ENCODE measurements at regions of chr17 and their contacts with region 1.

Region 1: GRCh38 chr17:76623271-76624146 is 20.0 kb downstream of the ST6GALNAC1 start:
- DNase-seq: peak; percentile 62 to 87 (median 79)
- H3K4me3 ChIP-seq: no peak overlapping the region
- H3K27ac ChIP-seq: no peak overlapping the region
- H3K4me1 ChIP-seq: no peaks in the 10 kb centered on the region
- H3K27me3 ChIP-seq: no peaks in the 10 kb centered on the region
- CTCF ChIP-seq: peak; percentile 71 to 95 (median 78)
- EP300 ChIP-seq: no peak
- POLR2A ChIP-seq: no peak

Region 2: DNA sequence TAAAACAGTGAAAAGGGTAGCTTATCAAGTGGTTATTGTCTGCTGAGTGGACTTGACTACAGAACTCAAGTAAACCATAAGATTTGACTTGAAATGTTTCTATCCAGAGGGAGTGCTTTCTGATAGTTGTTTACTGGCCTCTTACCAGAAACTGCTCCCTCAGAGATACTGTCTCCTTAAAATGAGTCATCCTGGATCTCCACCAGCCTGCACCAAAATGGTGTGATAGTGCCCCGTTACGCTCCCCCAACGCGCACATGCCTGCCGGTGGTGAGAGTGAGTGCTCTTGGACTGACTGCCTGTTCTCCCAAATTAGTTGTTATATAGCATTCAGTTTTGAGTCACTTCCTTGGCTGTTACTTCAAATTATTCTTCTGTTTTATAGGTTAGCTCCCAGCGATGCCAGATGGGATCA is 60.8 kb before region 1 on chr17:
- intact Hi-C with region 1: no loop called
- DNase-seq: peak; percentile 70 to 75 (median 73)
- H3K4me3 ChIP-seq: no peak overlapping the region
- H3K27ac ChIP-seq: no peak overlapping the region
- H3K4me1 ChIP-seq: peaks cover 24% of the 10 kb centered on the region
- H3K27me3 ChIP-seq: no peaks in the 10 kb centered on the region
- CTCF ChIP-seq: no peak
- EP300 ChIP-seq: no peak
- POLR2A ChIP-seq: no peak

Region 3: GRCh38 chr17:76714822-76715495 is 91.5 kb after region 1 on chr17:
- intact Hi-C with region 1: loop called in 1 of 4 experiments (anchors 10 kb)
- DNase-seq: peak; percentile 76 to 89 (median 86)
- H3K4me3 ChIP-seq: no peak overlapping the region
- H3K27ac ChIP-seq: no peak overlapping the region
- H3K4me1 ChIP-seq: peaks cover 2% of the 10 kb centered on the region
- H3K27me3 ChIP-seq: no peaks in the 10 kb centered on the region
- CTCF ChIP-seq: peak; percentile 75 to 86 (median 84)
- EP300 ChIP-seq: no peak
- POLR2A ChIP-seq: no peak